Transverse colon (tissue), 4 donors: ENCODE measurements at regions of chr20 and their contacts with region 1.

Region 1: GRCh38 chr20:38926142-38926933 is at the start of gene FAM83D:
- DNase-seq: peak; percentile 97
- H3K4me3 ChIP-seq: peak within 1 kb of the TSS; percentile 55 to 77 (median 67)
- H3K27ac ChIP-seq: peak within 1 kb of the TSS; percentile 62 to 86 (median 82)
- H3K4me1 ChIP-seq: peaks cover 0 to 24% (median 4%) of the 10 kb centered on the region in 4 donors
- H3K27me3 ChIP-seq: no peaks in the 10 kb centered on the region
- CTCF ChIP-seq: peak in 3 of 5 experiments; percentile 0 to 90 (median 2)
- EP300 ChIP-seq: no peak
- POLR2A ChIP-seq: peak; percentile 90
- total RNA-seq, gene FAM83D: 7.2 to 42.3 (median 19.6) TPM

Region 2: DNA sequence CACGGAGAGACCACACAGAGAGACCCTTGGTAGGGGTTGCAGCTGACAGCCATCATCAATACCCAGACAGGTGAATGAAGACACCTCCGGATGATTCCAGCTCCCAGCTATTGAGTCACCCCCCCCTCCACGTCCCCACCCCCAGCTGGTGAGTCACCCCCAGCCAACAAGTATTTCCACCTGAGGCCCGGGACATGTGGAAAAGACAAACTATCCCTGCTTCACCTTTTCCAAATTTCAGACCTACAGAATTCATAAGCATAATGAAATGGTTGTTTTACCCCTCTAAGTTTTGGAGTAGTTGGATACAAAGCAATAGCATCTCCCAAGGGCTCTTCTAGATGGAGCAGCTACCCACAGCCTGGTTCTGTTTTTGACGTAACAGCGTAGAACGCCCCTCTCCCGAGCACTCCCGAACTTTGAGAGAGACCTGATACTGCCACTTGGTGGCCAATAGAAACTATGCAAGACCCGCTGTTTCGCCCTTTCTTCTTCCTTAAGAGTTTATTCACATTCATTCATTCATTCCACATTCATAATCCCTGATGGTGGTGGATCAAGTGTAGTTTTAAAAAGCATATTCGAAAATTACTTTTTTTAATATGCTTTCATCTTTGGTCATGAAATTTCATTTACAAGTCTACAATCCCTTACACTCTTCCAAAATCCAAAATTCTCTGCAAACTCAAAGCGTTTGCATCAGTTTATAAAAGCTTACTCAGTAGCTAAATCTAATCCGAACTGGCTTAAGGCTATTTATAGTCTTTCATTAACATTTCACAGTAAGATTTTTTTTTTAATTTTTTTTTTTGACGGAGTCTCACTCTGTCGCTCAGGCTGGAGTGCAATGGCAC is 135.9 kb before region 1 on chr20:
- in situ Hi-C with region 1: no loop called
- intact Hi-C with region 1: no loop called
- DNase-seq: no peak
- H3K4me3 ChIP-seq: no peak overlapping the region
- H3K27ac ChIP-seq: no peak overlapping the region
- H3K4me1 ChIP-seq: no peaks in the 10 kb centered on the region
- H3K27me3 ChIP-seq: no peaks in the 10 kb centered on the region
- CTCF ChIP-seq: peak; percentile 35 to 73 (median 51)
- EP300 ChIP-seq: no peak
- POLR2A ChIP-seq: no peak

Region 3: DNA sequence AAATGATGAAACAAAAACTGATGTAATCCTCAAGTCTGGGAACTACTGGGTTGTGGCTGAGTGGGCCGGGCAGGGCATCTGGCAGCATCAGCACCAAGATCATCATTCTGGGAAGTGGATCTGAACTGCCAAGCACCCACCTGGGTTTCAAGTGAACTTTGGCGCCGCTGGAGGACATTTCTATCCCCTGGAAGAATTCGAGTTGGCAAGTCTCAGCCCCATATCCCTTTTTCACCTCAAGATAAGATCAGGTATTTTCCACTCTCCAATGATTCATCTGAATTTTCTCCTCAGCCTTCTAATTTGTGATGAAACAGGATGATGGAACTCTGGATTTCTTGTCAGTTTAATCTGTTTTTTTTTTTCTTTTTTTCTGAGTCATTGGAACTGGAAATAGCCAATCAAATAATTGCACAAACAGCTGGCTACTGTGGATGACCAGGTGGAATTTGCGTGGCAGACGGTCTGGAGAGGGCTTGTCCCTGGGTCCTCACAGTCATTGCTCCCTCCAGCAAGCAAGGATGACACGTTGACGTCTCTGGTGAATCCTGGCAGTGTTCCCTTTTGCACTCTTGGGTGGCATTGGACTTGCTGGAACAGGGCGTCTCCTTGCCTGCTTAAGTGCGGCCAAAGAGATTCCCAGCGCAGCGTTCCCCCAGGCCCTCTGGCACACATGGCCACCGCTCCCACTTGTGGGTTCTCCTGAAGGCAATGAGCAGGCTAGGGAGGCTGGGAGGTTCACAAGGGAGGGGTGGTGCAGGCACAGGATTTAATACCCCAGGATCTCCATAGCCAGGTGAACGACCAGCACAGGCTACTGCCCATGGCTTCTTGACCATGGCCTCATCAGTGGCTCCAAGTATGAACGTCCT is 116.2 kb after region 1 on chr20:
- in situ Hi-C with region 1: loop called in 3 of 4 experiments (anchors 10 to 25 kb)
- intact Hi-C with region 1: loop called (anchors 5 kb)
- DNase-seq: no peak
- H3K4me3 ChIP-seq: no peak overlapping the region
- H3K27ac ChIP-seq: no peak overlapping the region
- H3K4me1 ChIP-seq: no peaks in the 10 kb centered on the region
- H3K27me3 ChIP-seq: no peaks in the 10 kb centered on the region
- CTCF ChIP-seq: no peak
- EP300 ChIP-seq: no peak
- POLR2A ChIP-seq: no peak

Region 4: GRCh38 chr20:39049684-39050554 is 123.6 kb after region 1 on chr20:
- in situ Hi-C with region 1: loop called in 3 of 4 experiments (anchors 10 to 25 kb)
- intact Hi-C with region 1: no loop called
- DNase-seq: peak; percentile 84
- H3K4me3 ChIP-seq: peak overlapping the region; percentile 49 to 70 (median 59)
- H3K27ac ChIP-seq: peak overlapping the region; percentile 71 to 78 (median 74)
- H3K4me1 ChIP-seq: peaks cover 3 to 13% (median 7%) of the 10 kb centered on the region in 4 donors
- H3K27me3 ChIP-seq: no peaks in the 10 kb centered on the region
- CTCF ChIP-seq: peak; percentile 92 to 99 (median 99)
- EP300 ChIP-seq: no peak
- POLR2A ChIP-seq: no peak